Heart right ventricle (tissue), 16 donors: ENCODE measurements at regions of chr5 and their contacts with region 1.

Region 1: DNA sequence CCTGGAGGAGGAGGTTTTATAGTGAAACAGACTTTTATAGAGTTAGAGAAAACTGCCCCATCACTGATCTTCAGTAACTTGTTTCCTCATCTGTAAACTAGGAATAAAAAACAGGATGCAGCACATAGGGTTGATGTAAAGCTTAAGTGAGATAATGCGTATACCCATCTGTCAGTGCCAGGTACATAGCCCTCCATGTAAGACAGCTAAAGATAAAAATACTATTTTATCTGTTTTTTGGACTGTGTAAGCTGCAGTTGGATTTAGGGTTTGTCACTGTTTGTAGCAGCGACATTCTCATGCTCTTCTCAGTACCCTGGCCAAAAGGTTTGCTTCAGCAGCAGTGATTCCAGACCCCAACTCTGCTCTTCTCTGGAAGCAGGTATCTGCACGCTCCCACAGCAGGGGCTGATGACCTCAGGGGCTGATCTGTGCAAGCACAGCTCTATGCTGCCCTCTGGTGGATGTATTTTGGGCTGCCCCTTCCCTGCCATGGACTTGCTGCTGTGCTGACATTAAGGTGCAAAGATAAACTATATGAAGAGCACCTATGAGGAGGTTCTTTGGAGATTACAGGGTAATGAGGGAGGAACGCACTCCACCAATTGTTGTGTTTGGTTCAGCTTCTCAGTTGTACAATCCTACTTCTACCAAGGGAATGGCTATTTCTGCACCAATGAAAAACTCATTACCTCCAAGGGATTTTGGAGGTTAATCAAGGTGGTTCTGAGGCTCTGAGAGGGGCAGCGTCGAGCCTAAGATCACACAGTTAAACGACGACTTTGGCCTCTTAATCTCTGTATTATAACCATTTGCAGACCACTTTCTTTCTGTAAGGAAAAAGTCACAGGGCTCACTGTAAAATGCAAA is 13.1 kb downstream of the HMHB1 start:
- DNase-seq: peak; percentile 76 to 88
- ATAC-seq: peak; percentile 94 to 98 (median 96)
- H3K4me3 ChIP-seq: no peak overlapping the region
- H3K27ac ChIP-seq: no peak overlapping the region
- H3K4me1 ChIP-seq: peaks cover 0 to 13% (median 6%) of the 10 kb centered on the region in 9 donors
- H3K27me3 ChIP-seq: no peaks in the 10 kb centered on the region
- CTCF ChIP-seq: peak; percentile 92 to 99 (median 96)

Region 2: DNA sequence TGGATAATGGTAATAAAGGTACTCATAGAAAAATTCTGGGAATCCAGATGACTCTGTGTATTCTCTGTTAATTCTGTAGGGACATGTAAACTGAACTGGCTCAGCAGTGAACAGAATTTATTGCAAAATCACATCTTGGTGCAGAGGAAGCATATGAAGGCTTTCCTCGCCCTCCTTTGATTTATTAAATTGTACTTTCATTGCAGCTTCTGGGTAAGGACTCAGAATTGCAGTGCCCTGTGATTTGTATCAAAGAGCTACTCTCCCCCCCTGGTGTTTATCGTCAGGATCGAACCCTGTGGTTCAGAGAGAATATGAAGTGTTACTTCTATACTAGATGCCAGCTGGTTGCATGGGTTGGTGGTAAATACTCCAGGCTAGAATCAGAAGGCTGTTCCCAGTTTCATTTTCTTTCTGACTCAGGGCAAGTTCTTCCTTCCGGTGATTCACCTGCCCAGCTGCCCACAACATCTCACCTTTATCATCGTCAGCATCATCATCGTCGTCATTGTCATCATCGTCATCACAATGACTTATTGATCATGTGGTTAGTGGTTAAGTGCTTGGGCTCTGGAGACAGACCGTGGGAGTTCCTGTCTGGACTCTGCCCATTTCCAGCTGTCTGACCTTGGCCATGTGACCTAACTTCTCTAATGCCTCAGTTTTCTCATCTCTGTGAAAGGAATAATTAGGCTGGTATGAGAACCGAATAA is 816.1 kb before region 1 on chr5:
- intact Hi-C with region 1: loop called in 8 of 10 experiments (anchors 5 to 10 kb)
- DNase-seq: peak in 1 of 2 donors; percentile 32
- ATAC-seq: peak in 6 of 8 donors; percentile 18 to 64 (median 42)
- H3K4me3 ChIP-seq: no peak overlapping the region
- H3K27ac ChIP-seq: peak overlapping the region in 5 of 10 donors; percentile 20 to 77 (median 69)
- H3K4me1 ChIP-seq: peaks cover 7 to 69% (median 57%) of the 10 kb centered on the region in 9 donors
- H3K27me3 ChIP-seq: no peaks in the 10 kb centered on the region
- CTCF ChIP-seq: peak in 1 of 9 donors; percentile 26

Region 3: GRCh38 chr5:143124593-143124992 is 700.5 kb before region 1 on chr5:
- intact Hi-C with region 1: loop called in 1 of 10 experiments (anchors 10 kb)
- DNase-seq: no peak
- ATAC-seq: peak in 1 of 8 donors; percentile 38
- H3K4me3 ChIP-seq: no peak overlapping the region
- H3K27ac ChIP-seq: peak overlapping the region in 1 of 10 donors; percentile 17
- H3K4me1 ChIP-seq: peaks cover 13 to 82% (median 53%) of the 10 kb centered on the region in 9 donors
- H3K27me3 ChIP-seq: no peaks in the 10 kb centered on the region
- CTCF ChIP-seq: no peak

Region 4: GRCh38 chr5:143413958-143414669 is 411.0 kb before region 1 on chr5:
- intact Hi-C with region 1: loop called in 7 of 10 experiments (anchors 5 to 10 kb)
- DNase-seq: peak; percentile 17 to 20
- ATAC-seq: peak in 6 of 8 donors; percentile 49 to 90 (median 66)
- H3K4me3 ChIP-seq: no peak overlapping the region
- H3K27ac ChIP-seq: peak overlapping the region in 3 of 10 donors; percentile 26 to 47 (median 32)
- H3K4me1 ChIP-seq: peaks cover 0 to 21% (median 12%) of the 10 kb centered on the region in 9 donors
- H3K27me3 ChIP-seq: no peaks in the 10 kb centered on the region
- CTCF ChIP-seq: no peak

Region 5: GRCh38 chr5:143968011-143968878 is 143.2 kb after region 1 on chr5:
- intact Hi-C with region 1: loop called in 1 of 10 experiments (anchors 10 kb)
- DNase-seq: no peak
- ATAC-seq: peak in 2 of 8 donors; percentile 43 to 59
- H3K4me3 ChIP-seq: no peak overlapping the region
- H3K27ac ChIP-seq: no peak overlapping the region
- H3K4me1 ChIP-seq: no peaks in the 10 kb centered on the region
- H3K27me3 ChIP-seq: no peaks in the 10 kb centered on the region
- CTCF ChIP-seq: peak in 6 of 9 donors; percentile 45 to 60 (median 56)

Region 6: GRCh38 chr5:144191998-144192397 is 366.9 kb after region 1 on chr5:
- intact Hi-C with region 1: no loop called
- DNase-seq: no peak
- ATAC-seq: peak in 6 of 8 donors; percentile 57 to 75 (median 63)
- H3K4me3 ChIP-seq: peak overlapping the region in 4 of 10 donors; percentile 15 to 29 (median 26)
- H3K27ac ChIP-seq: peak overlapping the region in 1 of 10 donors; percentile 52
- H3K4me1 ChIP-seq: peaks cover 0 to 48% (median 6%) of the 10 kb centered on the region in 9 donors
- H3K27me3 ChIP-seq: peaks cover 0 to 17% (median 9%) of the 10 kb centered on the region in 7 donors
- CTCF ChIP-seq: peak in 7 of 9 donors; percentile 13 to 58 (median 41)